ENCODE measurements at regions of chr7 and their contacts with region 1.

Region 1: GRCh38 chr7:7681179-7681935 is 37.0 kb downstream of the RPA3 start:
- DNase-seq: peak; percentile 85
- ATAC-seq: peak; percentile 95
- H3K4me3 ChIP-seq: no peak overlapping the region
- H3K27ac ChIP-seq: peak overlapping the region; percentile 39; the same call in 1 of the 2 replicates
- H3K4me1 ChIP-seq: peaks cover 14% of the 10 kb centered on the region
- H3K27me3 ChIP-seq: no peaks in the 10 kb centered on the region
- CTCF ChIP-seq: peak; percentile 75; the same call in 1 of the 2 replicates

Region 2: GRCh38 chr7:7969306-7970236 is 288.2 kb after region 1 on chr7:
- CTCF ChIA-PET with region 1: no interaction called
- POLR2A ChIA-PET with region 1: no interaction called
- in situ Hi-C with region 1: no loop called
- intact Hi-C with region 1: loop called (anchors 10 kb)
- DNase-seq: peak; percentile 41
- ATAC-seq: peak; percentile 32
- H3K4me3 ChIP-seq: peak overlapping the region; percentile 87 to 88
- H3K27ac ChIP-seq: peak overlapping the region; percentile 91
- H3K4me1 ChIP-seq: peaks cover 31% of the 10 kb centered on the region
- H3K27me3 ChIP-seq: no peaks in the 10 kb centered on the region
- CTCF ChIP-seq: 0 out of 2 replicates have a peak, but pooled peaks have one; percentile 10